ENCODE measurements at regions of chr6 and their contacts with region 1.

Region 1: DNA sequence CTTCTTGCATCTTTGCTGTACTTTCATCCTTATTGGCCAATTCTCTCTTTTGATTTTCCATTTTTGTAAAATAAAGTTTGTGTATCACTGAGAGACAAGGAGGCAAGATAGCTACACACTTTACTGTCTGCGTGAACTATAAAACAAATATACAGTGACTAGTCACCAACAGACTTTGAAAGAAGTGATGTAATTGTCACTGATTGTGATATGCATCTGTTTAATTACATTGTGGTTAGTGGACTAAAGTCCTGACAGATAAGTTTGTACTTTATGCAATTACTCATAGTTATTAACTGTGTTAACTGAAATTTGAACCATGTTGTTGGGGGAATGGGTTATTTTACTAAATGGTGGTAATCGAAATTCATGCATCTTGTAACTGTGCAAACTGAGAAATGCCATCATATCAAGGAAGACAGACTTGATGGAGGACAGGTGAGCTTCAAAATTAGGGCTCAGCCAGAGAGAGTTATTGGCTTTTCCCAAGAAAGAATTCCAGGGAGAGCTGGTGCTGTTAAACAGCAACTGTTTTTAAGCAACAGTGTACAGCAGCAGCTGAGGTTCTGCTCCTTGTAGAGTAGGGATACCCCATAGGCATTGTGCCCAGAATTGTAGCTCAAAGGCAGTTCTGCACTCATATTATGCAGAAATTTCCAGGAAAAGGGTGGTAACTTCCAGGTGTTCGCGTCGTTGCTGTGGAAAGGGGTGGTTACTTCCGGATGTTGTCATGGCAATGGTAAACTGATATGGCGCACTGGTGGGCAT is 62.9 kb downstream of the EFHC1 start:
- DNase-seq: no peak
- H3K4me3 ChIP-seq: no peak overlapping the region
- CTCF ChIP-seq: no peak
- POLR2A ChIP-seq: no peak

Region 2: GRCh38 chr6:52435345-52435744 is 47.7 kb before region 1 on chr6:
- intact Hi-C with region 1: loop called (anchors 10 kb)
- DNase-seq: no peak
- H3K4me3 ChIP-seq: no peak overlapping the region
- CTCF ChIP-seq: no peak
- POLR2A ChIP-seq: no peak

Region 3: GRCh38 chr6:52995913-52996645 is 513.0 kb after region 1 on chr6:
- intact Hi-C with region 1: no loop called
- DNase-seq: peak; percentile 46 to 86
- H3K4me3 ChIP-seq: no peak overlapping the region
- CTCF ChIP-seq: no peak
- POLR2A ChIP-seq: no peak

Region 4: DNA sequence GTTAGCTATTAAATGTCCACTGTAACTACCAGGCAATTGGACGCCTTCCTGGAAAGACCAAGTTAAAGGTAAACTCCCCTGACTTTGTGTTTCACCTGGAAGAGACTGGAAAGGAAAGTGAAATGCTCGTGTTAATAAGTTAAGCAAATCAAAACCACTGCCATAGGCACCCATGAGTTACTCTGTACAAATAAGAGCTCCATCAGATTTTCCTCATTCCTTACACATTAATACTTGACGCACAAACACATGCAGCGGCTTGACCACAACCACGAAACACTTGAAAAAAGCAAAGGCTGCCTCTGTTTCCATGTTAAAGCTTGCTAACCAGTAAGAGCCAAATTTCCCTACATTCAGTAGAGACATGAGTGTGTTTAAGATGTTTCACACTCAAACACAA is 645.8 kb after region 1 on chr6:
- intact Hi-C with region 1: no loop called
- DNase-seq: no peak
- H3K4me3 ChIP-seq: no peak overlapping the region
- CTCF ChIP-seq: no peak
- POLR2A ChIP-seq: no peak

Measured in lower leg skin (tissue), 4 donors.